Sciatic nerve (tissue), 2 donors: ENCODE measurements at regions of chr5 and their contacts with region 1.

Region 1: GRCh38 chr5:180784497-180785097 is 18.0 kb downstream of the MGAT1 start:
- DNase-seq: peak; percentile 88
- ATAC-seq: peak; percentile 87

Region 2: GRCh38 chr5:180353048-180353979 is 431.3 kb before region 1 on chr5 and contains the start of gene GFPT2:
- intact Hi-C with region 1: loop called (anchors 5 kb)
- DNase-seq: peak; percentile 90
- ATAC-seq: peak; percentile 97
- total RNA-seq, gene GFPT2: 39.8 TPM

Region 3: GRCh38 chr5:180704368-180704869 is 80.2 kb before region 1 on chr5:
- intact Hi-C with region 1: no loop called
- DNase-seq: no peak
- ATAC-seq: no peak